Colonic mucosa (tissue), 4 donors: ENCODE measurements at regions of chr12 and their contacts with region 1.

Region 1: GRCh38 chr12:56189176-56189917 is at the start of gene SMARCC2:
- DNase-seq: peak; percentile 94
- H3K4me3 ChIP-seq: peak within 1 kb of the TSS; percentile 78
- H3K27ac ChIP-seq: peak within 1 kb of the TSS; percentile 95
- H3K4me1 ChIP-seq: peaks cover 13% of the 10 kb centered on the region
- H3K27me3 ChIP-seq: no peaks in the 10 kb centered on the region
- CTCF ChIP-seq: peak; percentile 56
- total RNA-seq, gene SMARCC2: 80.1 to 84.2 TPM

Region 2: DNA sequence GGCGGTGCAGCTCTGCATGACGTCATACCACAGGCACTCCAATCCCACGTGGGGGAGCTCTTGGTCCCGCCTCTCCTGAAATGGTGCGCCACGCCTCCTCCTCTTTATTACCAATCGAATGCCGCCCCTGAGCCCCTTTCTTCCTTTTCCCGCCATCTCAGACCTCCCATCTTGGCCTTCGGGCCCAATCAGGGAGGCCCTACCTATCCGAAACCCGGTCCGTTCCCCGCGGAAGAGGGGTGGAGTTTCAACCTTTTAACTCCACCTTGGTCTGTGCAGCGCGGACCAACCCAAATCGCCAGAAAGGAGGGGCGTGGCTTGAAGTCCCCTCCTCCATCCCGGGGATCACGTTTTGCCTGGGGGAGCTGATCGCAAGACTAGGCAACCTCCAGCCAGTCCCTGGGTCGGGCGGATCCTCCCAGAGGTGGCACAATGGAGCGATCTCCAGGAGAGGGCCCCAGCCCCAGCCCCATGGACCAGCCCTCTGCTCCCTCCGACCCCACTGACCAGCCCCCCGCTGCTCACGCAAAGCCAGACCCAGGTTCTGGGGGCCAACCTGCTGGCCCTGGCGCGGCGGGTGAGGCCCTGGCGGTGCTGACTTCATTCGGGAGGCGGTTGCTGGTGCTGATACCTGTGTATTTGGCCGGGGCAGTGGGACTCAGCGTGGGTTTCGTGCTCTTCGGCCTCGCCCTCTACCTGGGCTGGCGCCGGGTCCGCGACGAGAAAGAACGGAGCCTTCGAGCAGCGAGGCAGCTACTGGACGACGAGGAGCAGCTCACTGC is 61.3 kb before region 1 on chr12 and contains the start of gene ESYT1:
- intact Hi-C with region 1: loop called (anchors 2 kb)
- DNase-seq: peak; percentile 99
- H3K4me3 ChIP-seq: peak within 1 kb of the TSS; percentile 90
- H3K27ac ChIP-seq: peak within 1 kb of the TSS; percentile 81
- H3K4me1 ChIP-seq: peaks cover 14% of the 10 kb centered on the region
- H3K27me3 ChIP-seq: no peaks in the 10 kb centered on the region
- CTCF ChIP-seq: no peak
- total RNA-seq, gene ESYT1: 63.9 to 72.8 TPM

Region 3: GRCh38 chr12:56461235-56462159 is 272.1 kb after region 1 on chr12:
- intact Hi-C with region 1: loop called (anchors 5 kb)
- DNase-seq: no peak
- H3K4me3 ChIP-seq: no peak overlapping the region
- H3K27ac ChIP-seq: no peak overlapping the region
- H3K4me1 ChIP-seq: no peaks in the 10 kb centered on the region
- H3K27me3 ChIP-seq: no peaks in the 10 kb centered on the region
- CTCF ChIP-seq: no peak

Region 4: GRCh38 chr12:56775638-56776037 is 586.3 kb after region 1 on chr12:
- intact Hi-C with region 1: no loop called
- DNase-seq: no peak
- H3K4me3 ChIP-seq: no peak overlapping the region
- H3K27ac ChIP-seq: no peak overlapping the region
- H3K4me1 ChIP-seq: no peaks in the 10 kb centered on the region
- H3K27me3 ChIP-seq: no peaks in the 10 kb centered on the region
- CTCF ChIP-seq: no peak